HCT116 (cell line): ENCODE measurements at regions of chr7 and their contacts with region 1.

Region 1: GRCh38 chr7:157138424-157139110 is at the start of gene UBE3C:
- DNase-seq: peak; percentile 81
- ATAC-seq: peak; percentile 91
- H3K4me3 ChIP-seq: peak within 1 kb of the TSS; percentile 68 to 96
- H3K27ac ChIP-seq: peak within 1 kb of the TSS; percentile 91
- H3K4me1 ChIP-seq: peaks cover 3 to 30% of the 10 kb centered on the region in 2 experiments; a peak in 3 of 4 replicates
- H3K27me3 ChIP-seq: no peaks in the 10 kb centered on the region
- CTCF ChIP-seq: no peak
- POLR2A ChIP-seq: peak; percentile 62
- RAD21 ChIP-seq: no peak
- total RNA-seq, gene UBE3C: 68.3 TPM

Region 2: GRCh38 chr7:156903232-156903909 is 235.2 kb before region 1 on chr7:
- CTCF ChIA-PET with region 1: no interaction called
- POLR2A ChIA-PET with region 1: no interaction called
- RAD21 ChIA-PET with region 1: no interaction called
- intact Hi-C with region 1: loop called (anchors 5 kb)
- DNase-seq: peak; percentile 89
- ATAC-seq: peak; percentile 91
- H3K4me3 ChIP-seq: peak overlapping the region; percentile 8 to 45
- H3K27ac ChIP-seq: peak overlapping the region; percentile 54
- H3K4me1 ChIP-seq: peaks cover 30 to 61% of the 10 kb centered on the region in 2 experiments
- H3K27me3 ChIP-seq: no peaks in the 10 kb centered on the region
- CTCF ChIP-seq: no peak
- POLR2A ChIP-seq: no peak
- RAD21 ChIP-seq: no peak

Region 3: GRCh38 chr7:157004050-157004838 is 134.3 kb before region 1 on chr7:
- CTCF ChIA-PET with region 1: no interaction called
- POLR2A ChIA-PET with region 1: no interaction called
- RAD21 ChIA-PET with region 1: no interaction called
- intact Hi-C with region 1: loop called (anchors 5 kb)
- DNase-seq: no peak
- ATAC-seq: no peak
- H3K4me3 ChIP-seq: no peak overlapping the region
- H3K27ac ChIP-seq: no peak overlapping the region
- H3K4me1 ChIP-seq: peaks cover 12 to 25% of the 10 kb centered on the region in 2 experiments
- H3K27me3 ChIP-seq: no peaks in the 10 kb centered on the region
- CTCF ChIP-seq: no peak
- POLR2A ChIP-seq: no peak
- RAD21 ChIP-seq: no peak

Region 4: DNA sequence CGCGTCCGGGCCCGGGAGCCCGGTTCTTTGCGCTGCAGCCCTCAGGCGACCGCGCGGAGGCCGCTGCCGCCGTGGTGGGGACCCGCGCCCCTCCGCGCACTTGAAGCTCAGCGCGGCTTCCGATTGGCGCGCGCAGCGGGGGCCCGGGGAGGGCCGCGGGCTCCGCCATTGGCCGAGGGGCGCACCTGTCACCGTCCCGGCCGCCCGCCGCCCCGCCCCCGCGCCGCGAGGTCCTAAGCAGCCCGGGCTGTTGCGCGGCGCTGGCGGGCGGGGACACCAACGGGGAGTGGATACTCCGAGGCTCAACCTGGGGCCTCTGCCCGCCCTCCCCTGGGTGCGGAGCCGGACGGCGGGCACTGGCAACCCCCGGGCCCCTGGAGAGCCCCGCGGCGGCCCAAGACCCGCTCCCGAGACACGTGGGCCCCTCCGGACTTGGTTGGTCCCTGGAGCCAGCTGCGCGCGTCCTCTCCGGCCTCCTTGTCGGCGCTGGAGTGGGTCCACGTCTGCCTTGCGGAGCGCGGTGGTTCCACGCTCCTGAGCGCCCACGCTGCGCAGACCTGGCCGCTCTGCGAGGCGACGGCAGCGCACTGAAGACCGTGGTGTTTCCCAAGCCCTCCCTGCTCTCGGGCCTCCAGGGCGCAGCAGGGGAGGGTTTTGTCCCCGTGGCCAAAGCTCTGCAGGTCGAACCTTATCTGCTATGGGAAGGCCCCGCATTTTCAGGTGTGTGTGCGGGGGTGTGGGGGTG is 127.8 kb before region 1 on chr7 and contains the start of gene MNX1:
- CTCF ChIA-PET with region 1: no interaction called
- POLR2A ChIA-PET with region 1: no interaction called
- RAD21 ChIA-PET with region 1: no interaction called
- intact Hi-C with region 1: loop called (anchors 2 kb)
- DNase-seq: peak; percentile 54
- ATAC-seq: peak; percentile 93
- H3K4me3 ChIP-seq: peak within 1 kb of the TSS; percentile 64 to 92
- H3K27ac ChIP-seq: peak within 1 kb of the TSS; percentile 79
- H3K4me1 ChIP-seq: peaks cover 14 to 28% of the 10 kb centered on the region in 2 experiments
- H3K27me3 ChIP-seq: no peaks in the 10 kb centered on the region
- CTCF ChIP-seq: no peak
- POLR2A ChIP-seq: no peak
- RAD21 ChIP-seq: no peak
- total RNA-seq, gene MNX1: 7.7 TPM

Region 5: DNA sequence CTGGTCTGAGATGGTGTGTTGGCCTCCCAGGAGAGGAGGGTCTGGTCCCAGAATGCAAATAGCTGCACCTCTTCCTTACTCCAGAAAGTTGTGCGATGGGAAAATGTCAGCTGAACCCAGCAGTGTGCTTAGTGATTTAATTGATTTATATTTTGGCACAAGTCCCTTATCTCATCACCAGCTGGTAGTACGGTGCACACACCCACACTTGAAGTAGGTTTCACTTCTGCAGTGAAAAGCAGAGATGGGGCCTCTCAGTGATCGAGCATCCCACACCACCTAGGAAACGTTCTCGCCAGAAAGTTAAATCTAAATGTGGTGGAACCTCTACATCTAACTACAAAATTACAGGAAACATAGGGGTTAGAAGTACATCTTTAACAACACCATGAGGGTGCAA is 80.6 kb after region 1 on chr7:
- CTCF ChIA-PET with region 1: no interaction called
- POLR2A ChIA-PET with region 1: no interaction called
- RAD21 ChIA-PET with region 1: no interaction called
- intact Hi-C with region 1: no loop called
- DNase-seq: no peak
- ATAC-seq: no peak
- H3K4me3 ChIP-seq: no peak overlapping the region
- H3K27ac ChIP-seq: no peak overlapping the region
- H3K4me1 ChIP-seq: no peaks in the 10 kb centered on the region
- H3K27me3 ChIP-seq: no peaks in the 10 kb centered on the region
- CTCF ChIP-seq: no peak
- POLR2A ChIP-seq: no peak
- RAD21 ChIP-seq: no peak